ENCODE measurements at regions of chr18 and their contacts with region 1.

Region 1: GRCh38 chr18:3447895-3448837 is 1.8 kb upstream of the TGIF1 start:
- DNase-seq: peak; percentile 77
- ATAC-seq: peak; percentile 45
- H3K4me3 Mint-ChIP-seq: peak overlapping the region; percentile 96
- H3K27ac Mint-ChIP-seq: peak overlapping the region; percentile 100
- H3K4me1 Mint-ChIP-seq: peaks cover 34% of the 10 kb centered on the region
- H3K27me3 Mint-ChIP-seq: no peaks in the 10 kb centered on the region
- CTCF ChIP-seq: no peak

Region 2: DNA sequence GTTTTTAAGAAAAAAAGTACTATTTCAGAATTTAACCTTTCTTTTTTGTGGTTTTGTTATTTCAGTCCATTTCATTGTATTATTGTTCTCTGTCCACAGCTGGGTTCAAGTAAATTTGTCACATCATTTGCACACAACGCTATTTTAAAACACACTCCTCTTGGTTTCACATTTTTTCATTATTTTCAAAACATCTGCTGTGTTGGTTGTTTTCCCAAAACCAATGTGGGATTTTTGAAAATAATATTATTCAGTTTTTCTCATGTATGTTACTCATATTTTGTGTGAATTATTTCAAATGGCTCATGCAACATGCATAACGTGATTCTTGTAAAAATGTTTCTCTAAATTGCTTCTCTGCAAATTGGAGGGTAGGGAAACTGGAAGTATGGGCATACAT is 1466.1 kb before region 1 on chr18:
- CTCF ChIA-PET with region 1: no interaction called
- POLR2A ChIA-PET with region 1: no interaction called
- intact Hi-C with region 1: no loop called
- DNase-seq: no peak
- ATAC-seq: no peak
- H3K4me3 Mint-ChIP-seq: no peak overlapping the region
- H3K27ac Mint-ChIP-seq: no peak overlapping the region
- H3K4me1 Mint-ChIP-seq: no peaks in the 10 kb centered on the region
- H3K27me3 Mint-ChIP-seq: no peaks in the 10 kb centered on the region
- CTCF ChIP-seq: no peak

Region 3: GRCh38 chr18:2846636-2847364 is 601.4 kb before region 1 on chr18 and contains the start of gene EMILIN2:
- CTCF ChIA-PET with region 1: no interaction called
- POLR2A ChIA-PET with region 1: interaction called, 6 read pairs
- intact Hi-C with region 1: loop called (anchors 2 kb)
- DNase-seq: peak; percentile 87
- ATAC-seq: peak; percentile 81
- H3K4me3 Mint-ChIP-seq: peak within 1 kb of the TSS; percentile 96
- H3K27ac Mint-ChIP-seq: peak within 1 kb of the TSS; percentile 94
- H3K4me1 Mint-ChIP-seq: peaks cover 52% of the 10 kb centered on the region
- H3K27me3 Mint-ChIP-seq: peaks cover 8% of the 10 kb centered on the region
- CTCF ChIP-seq: no peak
- total RNA-seq, gene EMILIN2: 73.0 and 80.9 TPM in 2 replicates

Region 4: DNA sequence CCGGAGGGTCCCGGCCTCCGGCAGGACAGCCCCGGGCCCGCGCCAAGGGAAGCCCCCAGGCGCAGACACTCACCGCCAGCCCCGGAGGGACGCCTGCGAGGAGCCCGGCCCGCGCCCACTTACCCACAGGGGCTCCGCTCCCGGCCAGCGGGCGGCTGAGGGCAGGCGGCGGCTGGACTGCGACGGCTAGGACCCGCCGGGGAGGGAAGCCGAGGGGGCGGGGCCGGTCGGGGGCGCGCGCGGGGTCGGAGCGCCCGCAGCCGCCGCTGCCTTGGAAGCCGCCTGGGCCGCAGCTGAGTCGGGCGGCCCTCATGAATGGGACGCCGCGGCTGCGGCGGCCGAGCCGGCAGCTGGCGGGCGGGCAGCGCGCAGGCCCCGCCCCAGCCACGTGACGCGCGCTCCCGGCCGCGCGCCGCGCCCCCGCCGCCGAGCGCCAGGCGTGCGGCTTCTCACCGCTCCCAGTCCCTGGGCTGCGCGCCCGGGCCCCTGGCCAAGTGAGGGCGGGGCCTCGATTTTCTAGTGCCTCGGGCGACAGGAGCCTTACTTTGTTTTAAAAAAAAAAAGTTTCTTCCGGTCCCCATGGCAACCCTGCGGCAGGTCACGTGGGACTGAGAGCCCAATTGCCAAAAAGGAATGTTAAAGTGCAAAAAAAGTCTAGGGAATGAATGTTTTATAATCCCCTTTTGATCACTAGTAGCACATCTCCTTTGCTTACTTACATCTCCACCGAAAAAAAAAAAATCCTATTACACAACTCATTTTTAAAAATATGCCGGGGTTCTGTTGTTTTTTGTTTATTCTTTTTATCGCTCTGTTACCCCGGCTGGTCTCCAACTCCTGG is 435.0 kb before region 1 on chr18 and contains the start of gene LPIN2:
- CTCF ChIA-PET with region 1: no interaction called
- POLR2A ChIA-PET with region 1: no interaction called
- intact Hi-C with region 1: loop called (anchors 2 kb)
- DNase-seq: peak; percentile 91
- ATAC-seq: peak; percentile 86
- H3K4me3 Mint-ChIP-seq: peak within 1 kb of the TSS; percentile 95
- H3K27ac Mint-ChIP-seq: peak within 1 kb of the TSS; percentile 88
- H3K4me1 Mint-ChIP-seq: peaks cover 59% of the 10 kb centered on the region
- H3K27me3 Mint-ChIP-seq: no peaks in the 10 kb centered on the region
- CTCF ChIP-seq: no peak
- total RNA-seq, gene LPIN2: 21.8 and 24.4 TPM in 2 replicates

Region 5: GRCh38 chr18:3281456-3282400 is 166.4 kb before region 1 on chr18:
- CTCF ChIA-PET with region 1: interaction called, 31 read pairs
- POLR2A ChIA-PET with region 1: interaction called, 12 read pairs
- intact Hi-C with region 1: no loop called
- DNase-seq: no peak
- ATAC-seq: peak; percentile 39
- H3K4me3 Mint-ChIP-seq: no peak overlapping the region
- H3K27ac Mint-ChIP-seq: no peak overlapping the region
- H3K4me1 Mint-ChIP-seq: peaks cover 41% of the 10 kb centered on the region
- H3K27me3 Mint-ChIP-seq: no peaks in the 10 kb centered on the region
- CTCF ChIP-seq: peak; percentile 49

Region 6: GRCh38 chr18:3402982-3403451 is 45.1 kb before region 1 on chr18:
- CTCF ChIA-PET with region 1: interaction called, 7 read pairs
- POLR2A ChIA-PET with region 1: interaction called, 143 read pairs
- intact Hi-C with region 1: loop called (anchors 1 kb)
- DNase-seq: no peak
- ATAC-seq: peak; percentile 20
- H3K4me3 Mint-ChIP-seq: peak overlapping the region; percentile 15
- H3K27ac Mint-ChIP-seq: peak overlapping the region; percentile 94
- H3K4me1 Mint-ChIP-seq: peaks cover 60% of the 10 kb centered on the region
- H3K27me3 Mint-ChIP-seq: no peaks in the 10 kb centered on the region
- CTCF ChIP-seq: no peak

Region 7: GRCh38 chr18:3585656-3586509 is 137.7 kb after region 1 on chr18:
- CTCF ChIA-PET with region 1: interaction called, 6 read pairs
- POLR2A ChIA-PET with region 1: interaction called, 106 read pairs
- intact Hi-C with region 1: loop called (anchors 1 kb)
- DNase-seq: peak; percentile 40
- ATAC-seq: peak; percentile 45
- H3K4me3 Mint-ChIP-seq: peak overlapping the region; percentile 74
- H3K27ac Mint-ChIP-seq: peak overlapping the region; percentile 96
- H3K4me1 Mint-ChIP-seq: peaks cover 53% of the 10 kb centered on the region
- H3K27me3 Mint-ChIP-seq: no peaks in the 10 kb centered on the region
- CTCF ChIP-seq: no peak

Region 8: GRCh38 chr18:4119813-4120212 is 671.6 kb after region 1 on chr18:
- CTCF ChIA-PET with region 1: no interaction called
- POLR2A ChIA-PET with region 1: no interaction called
- intact Hi-C with region 1: no loop called
- DNase-seq: no peak
- ATAC-seq: no peak
- H3K4me3 Mint-ChIP-seq: no peak overlapping the region
- H3K27ac Mint-ChIP-seq: no peak overlapping the region
- H3K4me1 Mint-ChIP-seq: no peaks in the 10 kb centered on the region
- H3K27me3 Mint-ChIP-seq: no peaks in the 10 kb centered on the region
- CTCF ChIP-seq: no peak